ENCODE measurements at regions of chr12 and their contacts with region 1.

Region 1: GRCh38 chr12:80632835-80633234 is 74.6 kb upstream of the MYF6 start:
- DNase-seq: peak; percentile 23
- ATAC-seq: peak; percentile 75
- H3K4me3 ChIP-seq: no peak overlapping the region
- H3K27ac ChIP-seq: no peak overlapping the region
- H3K4me1 ChIP-seq: no peaks in the 10 kb centered on the region
- H3K27me3 ChIP-seq: no peaks in the 10 kb centered on the region
- CTCF ChIP-seq: peak; percentile 53
- EP300 ChIP-seq: no peak
- POLR2A ChIP-seq: no peak
- RAD21 ChIP-seq: no peak

Region 2: DNA sequence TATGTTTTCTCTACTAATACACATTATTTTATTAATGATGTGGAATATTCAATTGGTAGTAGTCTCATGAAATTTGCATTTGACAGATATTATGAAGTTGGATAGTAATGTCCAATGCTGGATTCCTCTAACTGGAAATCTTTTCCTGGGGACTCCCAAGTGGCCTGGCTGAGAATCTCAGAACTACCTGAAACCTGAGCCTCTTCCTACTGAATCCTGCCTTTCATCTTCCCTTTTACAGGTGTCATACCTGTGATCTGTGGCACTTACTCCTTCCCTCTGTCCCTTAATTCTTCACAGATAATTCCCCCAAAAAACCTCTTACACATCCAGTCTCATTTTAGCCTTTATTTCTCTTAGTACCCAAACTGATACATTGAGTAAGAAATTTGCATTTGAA is 15.1 kb before region 1 on chr12:
- CTCF ChIA-PET with region 1: no interaction called
- POLR2A ChIA-PET with region 1: no interaction called
- in situ Hi-C with region 1: no loop called
- intact Hi-C with region 1: no loop called
- DNase-seq: no peak
- ATAC-seq: no peak
- H3K4me3 ChIP-seq: no peak overlapping the region
- H3K27ac ChIP-seq: no peak overlapping the region
- H3K4me1 ChIP-seq: no peaks in the 10 kb centered on the region
- H3K27me3 ChIP-seq: no peaks in the 10 kb centered on the region
- CTCF ChIP-seq: no peak
- EP300 ChIP-seq: no peak
- POLR2A ChIP-seq: no peak
- RAD21 ChIP-seq: no peak

Region 3: GRCh38 chr12:80648881-80649280 is 16.0 kb after region 1 on chr12:
- CTCF ChIA-PET with region 1: no interaction called
- POLR2A ChIA-PET with region 1: no interaction called
- in situ Hi-C with region 1: no loop called
- intact Hi-C with region 1: loop called (anchors 1 kb)
- DNase-seq: no peak
- ATAC-seq: no peak
- H3K4me3 ChIP-seq: no peak overlapping the region
- H3K27ac ChIP-seq: no peak overlapping the region
- H3K4me1 ChIP-seq: no peaks in the 10 kb centered on the region
- H3K27me3 ChIP-seq: no peaks in the 10 kb centered on the region
- CTCF ChIP-seq: no peak
- EP300 ChIP-seq: no peak
- POLR2A ChIP-seq: no peak
- RAD21 ChIP-seq: no peak

Measured in HepG2 (cell line).